Adrenal gland (tissue), 19 donors: ENCODE measurements at regions of chr19 and their contacts with region 1.

Region 1: GRCh38 chr19:45059278-45059965 is 16.9 kb downstream of the ZNF296 start:
- DNase-seq: peak; percentile 75 to 93 (median 85)
- H3K4me3 ChIP-seq: no peak overlapping the region
- H3K27ac ChIP-seq: no peak overlapping the region
- H3K4me1 ChIP-seq: no peaks in the 10 kb centered on the region
- H3K27me3 ChIP-seq: no peaks in the 10 kb centered on the region
- CTCF ChIP-seq: peak; percentile 85 to 96 (median 88)
- POLR2A ChIP-seq: no peak

Region 2: DNA sequence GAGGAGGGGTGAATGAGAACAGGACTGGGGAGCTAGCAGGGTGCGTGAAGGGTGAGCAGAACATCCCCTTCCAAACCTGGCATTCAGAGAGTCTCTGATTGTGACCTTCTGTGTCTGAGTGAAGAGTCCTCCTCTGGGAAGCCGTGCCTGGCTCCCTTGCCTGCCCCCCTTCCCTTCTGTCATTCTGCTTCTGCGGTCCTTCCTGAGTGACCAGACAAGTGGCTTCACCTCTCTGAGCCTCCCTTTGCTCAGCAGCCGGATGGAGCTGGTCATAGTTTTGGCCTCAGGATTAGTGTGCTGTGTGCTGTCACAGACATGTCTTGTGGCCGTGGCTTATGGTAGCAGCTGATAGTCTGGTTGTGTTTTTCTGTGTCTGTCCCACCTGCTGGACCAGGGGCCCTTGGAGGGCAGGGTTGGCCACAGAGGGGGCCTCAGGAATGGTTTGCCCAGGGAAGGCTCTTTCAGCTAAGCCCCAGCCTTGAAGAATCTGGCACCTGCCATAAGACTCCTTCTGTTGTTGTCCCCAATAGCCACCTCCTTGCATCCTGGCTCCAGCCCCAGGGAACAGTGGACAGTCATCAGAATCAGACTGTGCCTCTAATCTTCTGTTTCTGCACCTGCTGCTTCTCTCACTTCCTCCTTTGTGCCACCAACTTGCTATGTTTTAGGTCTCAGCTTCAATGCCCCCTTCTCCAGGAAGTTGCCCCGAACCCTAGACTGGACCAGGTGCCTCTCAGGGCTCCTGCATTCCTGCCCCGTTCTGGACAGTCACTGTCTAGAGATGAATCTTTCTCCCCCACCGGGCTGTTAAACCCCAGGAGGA is 98.3 kb before region 1 on chr19:
- intact Hi-C with region 1: loop called in 1 of 2 experiments (anchors 10 kb)
- DNase-seq: peak in 1 of 7 donors; percentile 23
- H3K4me3 ChIP-seq: no peak overlapping the region
- H3K27ac ChIP-seq: peak overlapping the region in 3 of 5 donors; percentile 30 to 34 (median 31)
- H3K4me1 ChIP-seq: peaks cover 18 to 52% of the 10 kb centered on the region in 2 donors
- H3K27me3 ChIP-seq: no peaks in the 10 kb centered on the region
- CTCF ChIP-seq: no peak
- POLR2A ChIP-seq: no peak

Region 3: DNA sequence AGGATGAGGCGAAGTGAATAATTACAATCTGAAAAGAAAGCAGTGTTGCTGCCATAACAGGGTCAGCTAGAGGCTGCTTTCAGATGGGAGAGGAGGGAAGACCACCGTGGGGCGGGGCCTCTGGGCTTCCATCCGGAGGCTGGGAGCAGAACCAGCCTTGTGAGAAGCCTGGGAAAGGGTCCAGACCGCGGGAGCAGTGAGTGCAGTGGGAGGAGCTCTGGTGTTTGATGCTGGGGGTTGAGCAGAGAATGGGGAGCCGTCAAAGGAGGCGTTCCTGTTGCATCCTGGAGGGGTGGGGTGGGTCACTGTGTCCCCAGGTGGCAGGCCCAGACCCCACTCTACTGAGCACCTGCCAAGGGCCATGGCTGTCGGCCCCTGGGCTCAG is 83.3 kb after region 1 on chr19:
- intact Hi-C with region 1: loop called in 1 of 2 experiments (anchors 5 kb)
- DNase-seq: peak in 5 of 7 donors; percentile 48 to 73 (median 61)
- H3K4me3 ChIP-seq: no peak overlapping the region
- H3K27ac ChIP-seq: peak overlapping the region in 4 of 5 donors; percentile 60 to 89 (median 81)
- H3K4me1 ChIP-seq: peaks cover 15 to 25% of the 10 kb centered on the region in 2 donors
- H3K27me3 ChIP-seq: no peaks in the 10 kb centered on the region
- CTCF ChIP-seq: no peak
- POLR2A ChIP-seq: no peak